Left cardiac atrium (tissue), 4 donors: ENCODE measurements at regions of chr15 and their contacts with region 1.

Region 1: DNA sequence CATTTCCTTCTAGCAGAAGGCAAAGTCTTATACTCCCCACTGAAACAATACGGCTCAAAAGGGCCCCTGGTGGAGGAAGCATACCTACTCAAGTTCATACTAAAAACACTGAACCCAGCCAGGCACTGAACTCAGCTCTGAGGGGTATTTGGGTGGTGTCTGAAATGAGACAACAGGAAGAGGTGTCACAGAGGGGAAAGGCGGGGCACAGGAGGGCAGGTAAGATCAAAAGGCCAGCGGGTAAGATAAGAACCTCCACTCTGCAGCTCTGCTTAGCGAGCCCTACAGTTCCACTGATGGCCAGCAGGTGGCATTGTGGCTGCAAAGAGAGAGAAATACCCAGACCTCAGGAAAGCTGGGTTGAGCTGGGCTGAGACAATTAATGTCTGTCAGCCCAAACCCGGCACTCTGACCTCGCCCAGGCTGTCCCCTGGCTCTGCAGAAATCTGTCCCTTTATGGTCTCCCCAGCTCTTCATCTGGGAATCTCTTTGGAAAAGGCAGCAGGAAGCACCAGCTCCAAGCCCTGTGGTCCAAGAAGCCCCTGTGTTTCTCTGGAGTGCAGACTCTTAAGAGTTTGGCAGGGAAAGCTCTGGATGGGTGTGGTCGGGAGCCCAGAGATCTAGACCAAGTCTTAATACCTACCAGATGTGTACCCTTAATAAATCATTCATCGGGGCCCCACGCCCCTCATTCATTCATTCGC is 8.4 kb downstream of the MFGE8 start:
- DNase-seq: peak; percentile 79
- ATAC-seq: peak; percentile 69 to 74

Region 2: GRCh38 chr15:89003865-89004725 is 99.3 kb after region 1 on chr15:
- intact Hi-C with region 1: loop called (anchors 2 to 5 kb)
- DNase-seq: peak; percentile 40
- ATAC-seq: peak; percentile 83

Region 3: DNA sequence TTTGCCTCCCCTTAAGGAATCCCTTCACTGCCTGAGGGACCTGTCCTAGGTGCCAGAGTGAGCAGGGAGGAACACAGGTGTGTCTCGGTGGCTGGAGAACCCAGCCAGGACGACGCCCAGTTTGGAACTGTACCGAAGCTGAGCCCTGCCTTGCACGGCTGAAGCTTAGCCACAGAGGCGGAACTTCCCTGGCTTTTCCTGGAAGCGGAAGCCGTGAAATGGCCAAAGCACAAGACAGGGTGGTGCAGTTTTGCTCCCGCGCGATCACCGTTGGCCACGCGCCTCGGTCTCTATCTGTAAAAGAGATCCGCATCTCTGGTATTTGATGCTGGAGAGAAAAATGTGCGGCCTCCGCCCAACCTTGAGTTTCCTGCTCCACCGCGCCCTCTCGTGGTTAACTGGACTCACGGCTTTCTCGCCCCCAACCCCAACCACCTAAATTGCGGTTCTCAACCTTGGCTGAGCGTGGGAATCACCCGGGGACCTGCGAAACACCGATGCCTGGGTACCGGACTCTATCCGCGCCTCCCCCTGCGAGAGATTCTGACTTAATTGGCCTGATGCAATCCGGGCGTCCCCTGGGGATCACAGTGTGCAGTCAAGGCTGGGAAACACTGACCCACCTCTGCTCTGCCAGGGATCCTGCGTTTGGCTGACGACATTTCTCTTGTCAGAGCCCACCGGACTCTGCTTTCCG is 112.7 kb after region 1 on chr15:
- intact Hi-C with region 1: loop called in 1 of 2 experiments (anchors 2 kb)
- DNase-seq: peak; percentile 86
- ATAC-seq: peak; percentile 62 to 77

Region 4: DNA sequence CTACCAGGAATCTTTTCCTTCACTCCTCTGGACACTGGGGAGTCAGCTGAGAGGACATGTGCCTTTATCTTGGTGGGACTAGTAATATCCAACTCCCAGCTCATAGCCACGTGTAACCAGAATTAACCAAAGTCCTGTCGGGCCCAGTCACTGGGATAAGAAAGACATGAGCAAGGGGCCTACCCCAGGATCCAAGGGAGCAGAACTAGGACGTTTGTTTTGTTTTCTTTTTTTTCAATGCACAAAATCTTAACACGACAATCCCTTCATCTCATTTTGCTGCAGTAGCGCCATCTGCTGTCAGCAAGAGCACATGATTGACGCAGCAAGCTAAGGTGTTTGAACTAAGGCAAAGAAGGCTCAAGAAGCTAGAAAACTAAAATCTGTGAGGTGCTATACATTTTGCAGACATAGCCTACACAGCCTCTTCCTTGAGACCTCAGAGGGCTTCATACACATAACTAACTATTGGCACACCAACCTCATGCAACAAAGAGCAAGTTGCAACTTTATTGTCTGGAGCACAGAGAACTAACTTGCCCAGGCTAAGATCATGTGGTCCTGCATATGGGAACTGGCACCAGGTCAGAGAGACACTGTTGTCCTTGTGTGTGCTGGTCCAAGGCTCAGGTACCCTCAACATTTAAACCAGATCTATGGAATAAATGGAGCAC is 273.0 kb after region 1 on chr15:
- intact Hi-C with region 1: loop called in 1 of 2 experiments (anchors 5 kb)
- DNase-seq: peak; percentile 59
- ATAC-seq: peak; percentile 21 to 61